ENCODE measurements at regions of chr3 and their contacts with region 1.

Region 1: GRCh38 chr3:158801696-158802408 is at the start of gene MFSD1:
- DNase-seq: peak; percentile 96
- H3K4me3 ChIP-seq: peak within 1 kb of the TSS; percentile 82
- H3K27ac ChIP-seq: peak within 1 kb of the TSS; percentile 85
- H3K4me1 ChIP-seq: peaks cover 35% of the 10 kb centered on the region
- H3K27me3 ChIP-seq: no peaks in the 10 kb centered on the region
- CTCF ChIP-seq: no peak
- total RNA-seq, gene MFSD1: 26.2 TPM

Region 2: GRCh38 chr3:158775426-158776410 is 26.1 kb before region 1 on chr3:
- intact Hi-C with region 1: loop called (anchors 2 kb)
- DNase-seq: no peak
- H3K4me3 ChIP-seq: no peak overlapping the region
- H3K27ac ChIP-seq: peak overlapping the region; percentile 60
- H3K4me1 ChIP-seq: peaks cover 24% of the 10 kb centered on the region
- H3K27me3 ChIP-seq: no peaks in the 10 kb centered on the region
- CTCF ChIP-seq: no peak

Measured in left ventricle myocardium inferior (tissue), 1 donor.